Cardiac septum (tissue), 1 donor: ENCODE measurements at regions of chr4 and their contacts with region 1.

Region 1: DNA sequence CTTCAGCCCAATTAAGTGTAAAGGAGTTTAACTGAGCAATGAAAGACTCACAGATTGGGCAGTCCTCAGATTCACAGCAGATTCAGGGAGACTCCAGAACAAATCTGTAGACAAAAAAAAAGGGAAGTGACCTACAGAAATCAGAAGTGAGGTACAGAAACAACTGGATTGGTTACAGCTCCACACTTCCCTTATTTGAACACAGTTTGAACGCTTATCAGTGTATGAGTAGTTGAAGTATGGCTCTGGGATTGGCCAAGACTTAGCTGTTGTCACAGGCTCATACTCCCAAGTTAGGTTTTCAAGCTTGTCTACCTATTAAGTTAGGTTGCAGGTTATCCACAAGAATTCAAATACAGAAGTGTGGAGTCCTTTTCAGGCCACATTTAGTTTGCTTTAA is 112.4 kb upstream of the ELOVL6 start:
- DNase-seq: no peak

Region 2: DNA sequence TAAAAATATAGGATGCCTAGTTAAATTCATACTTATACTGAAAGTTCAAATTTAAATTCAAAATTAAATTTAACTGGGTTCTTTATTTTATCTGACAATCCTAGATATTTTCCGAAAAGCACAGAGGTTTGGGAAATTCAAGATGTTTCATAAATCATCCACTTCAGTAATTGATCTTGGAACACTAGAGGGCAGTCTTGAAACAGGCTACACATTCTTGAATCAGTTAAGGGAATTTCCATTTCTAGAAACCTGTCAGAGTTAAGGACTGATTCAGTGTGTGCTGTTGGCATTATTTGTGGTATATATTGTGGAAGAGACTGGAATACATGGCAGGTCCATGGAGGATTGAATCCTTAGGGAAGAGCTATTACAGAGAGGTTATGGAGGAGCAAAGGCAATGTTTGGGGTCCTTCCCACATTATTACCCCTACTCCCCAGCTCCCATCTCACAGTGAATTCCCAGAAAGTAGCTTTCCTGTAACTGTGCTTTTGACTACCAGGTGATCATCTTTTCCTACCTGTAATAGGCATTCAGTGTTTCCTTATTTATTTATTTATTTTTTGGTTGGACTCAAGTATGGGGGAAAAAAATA is 305.2 kb before region 1 on chr4:
- intact Hi-C with region 1: loop called (anchors 10 kb)
- DNase-seq: no peak

Region 3: DNA sequence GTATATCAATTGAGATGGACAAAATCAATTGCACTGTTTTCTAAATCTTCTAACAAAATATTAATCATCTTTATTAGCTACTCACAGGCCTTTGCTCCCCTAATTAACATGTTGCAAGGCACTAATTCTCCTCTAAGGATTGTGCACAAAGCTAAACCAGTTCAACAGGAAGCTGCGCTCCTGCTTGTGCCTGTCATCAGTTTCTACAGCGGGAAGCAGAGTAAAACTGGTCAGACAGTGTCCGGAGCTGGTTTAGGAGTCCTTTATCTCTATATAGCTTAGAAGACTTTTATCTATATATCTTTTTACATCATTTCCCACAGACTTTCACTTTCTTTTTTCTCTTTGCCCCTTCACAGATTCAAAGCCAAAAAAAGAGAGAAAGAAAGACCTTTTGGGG is 191.5 kb before region 1 on chr4:
- intact Hi-C with region 1: no loop called
- DNase-seq: no peak

Region 4: GRCh38 chr4:110510955-110511544 is 200.3 kb after region 1 on chr4:
- intact Hi-C with region 1: loop called (anchors 2 kb)
- DNase-seq: no peak